IMR-90 (cell line): ENCODE measurements at regions of chr16 and their contacts with region 1.

Region 1: GRCh38 chr16:74563828-74564263 is 43.1 kb downstream of the GLG1 start:
- DNase-seq: peak; percentile 43
- ATAC-seq: peak; percentile 65; the same call in 1 of the 2 replicates
- H3K4me3 ChIP-seq: no peak overlapping the region
- H3K27ac ChIP-seq: no peak overlapping the region
- H3K4me1 ChIP-seq: peaks cover 3% of the 10 kb centered on the region
- H3K27me3 ChIP-seq: no peaks in the 10 kb centered on the region
- CTCF ChIP-seq: no peak
- POLR2A ChIP-seq: no peak
- RAD21 ChIP-seq: no peak

Region 2: GRCh38 chr16:73549984-73550631 is 1013.7 kb before region 1 on chr16:
- CTCF ChIA-PET with region 1: no interaction called
- POLR2A ChIA-PET with region 1: no interaction called
- dilution Hi-C with region 1: no loop called
- in situ Hi-C with region 1: no loop called
- intact Hi-C with region 1: no loop called
- DNase-seq: no peak
- ATAC-seq: no peak
- H3K4me3 ChIP-seq: no peak overlapping the region
- H3K27ac ChIP-seq: no peak overlapping the region
- H3K4me1 ChIP-seq: no peaks in the 10 kb centered on the region
- H3K27me3 ChIP-seq: peaks cover 4% of the 10 kb centered on the region; the same call in 1 of the 2 replicates
- CTCF ChIP-seq: no peak
- POLR2A ChIP-seq: no peak
- RAD21 ChIP-seq: no peak

Region 3: DNA sequence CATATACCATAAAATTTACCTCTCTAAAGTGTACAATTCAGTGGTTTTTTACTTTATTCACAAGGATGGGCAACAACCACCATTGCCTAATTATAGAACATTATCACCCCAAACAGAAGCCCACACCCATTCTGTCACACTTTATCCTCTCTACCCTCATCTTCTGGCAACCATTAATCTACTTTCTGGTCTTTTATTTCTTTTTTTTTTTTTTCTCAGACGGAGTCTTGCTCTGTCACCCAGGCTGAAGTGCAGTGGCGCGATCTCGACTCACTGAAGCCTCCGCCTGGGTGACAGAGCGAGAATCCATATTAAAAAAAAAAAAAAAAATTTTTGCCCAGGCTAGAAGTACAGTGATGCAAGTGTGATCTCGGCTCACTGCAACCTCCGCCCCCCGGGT is 51.9 kb before region 1 on chr16:
- CTCF ChIA-PET with region 1: no interaction called
- POLR2A ChIA-PET with region 1: no interaction called
- dilution Hi-C with region 1: no loop called
- in situ Hi-C with region 1: no loop called
- intact Hi-C with region 1: loop called (anchors 10 kb)
- DNase-seq: no peak
- ATAC-seq: no peak
- H3K4me3 ChIP-seq: no peak overlapping the region
- H3K27ac ChIP-seq: no peak overlapping the region
- H3K4me1 ChIP-seq: no peaks in the 10 kb centered on the region; the same call in 1 of the 2 replicates
- H3K27me3 ChIP-seq: no peaks in the 10 kb centered on the region
- CTCF ChIP-seq: no peak
- POLR2A ChIP-seq: no peak
- RAD21 ChIP-seq: no peak